Activated CD8-positive, alpha-beta T cell treated with anti-CD3 and anti-CD28 coated beads, Interleukin-2, amount 10 ng/mL, durations not matched to agents 7 days and 5 days (primary cell): ENCODE measurements at regions of chr12 and their contacts with region 1.

Region 1: DNA sequence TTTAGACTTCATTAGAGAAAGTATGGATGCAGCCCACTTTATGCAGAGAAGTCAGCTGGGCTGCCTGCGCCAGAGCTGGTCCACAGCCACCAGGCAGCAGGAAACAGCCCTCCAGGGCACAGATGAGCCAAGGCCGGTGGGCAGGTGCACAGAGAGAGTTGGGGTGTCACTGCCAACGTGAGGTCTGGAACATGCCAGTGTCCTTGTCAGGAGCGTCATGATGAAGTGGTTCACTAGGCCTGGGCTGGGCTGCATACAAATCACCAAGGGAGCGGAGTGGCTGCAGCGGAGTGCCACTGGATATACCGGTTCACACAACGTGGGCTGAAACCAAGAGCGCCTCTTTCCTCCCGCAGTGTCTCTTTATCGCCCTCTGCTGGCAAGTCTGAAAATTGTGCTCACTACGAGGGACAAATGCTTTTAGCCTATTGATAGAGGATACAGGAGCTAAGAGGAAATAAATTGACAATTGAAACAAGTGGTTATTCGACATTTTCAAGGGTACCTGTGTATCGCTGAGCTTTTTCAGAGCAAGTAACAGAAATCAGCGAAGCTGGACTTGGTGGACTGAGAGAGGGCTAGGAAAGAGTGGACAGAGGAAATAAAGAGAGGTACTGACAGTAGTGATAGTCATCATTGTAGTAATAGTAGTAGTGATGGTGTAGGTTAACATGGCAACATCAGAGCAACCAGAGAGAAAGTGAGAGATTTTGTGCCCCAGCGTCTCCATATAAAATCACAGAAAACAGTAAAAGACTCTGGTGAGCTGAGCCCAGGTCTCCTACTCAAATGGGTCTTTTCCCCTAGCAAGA is 52.0 kb upstream of the ITPR2 start:
- DNase-seq: peak; percentile 91
- ATAC-seq: peak; percentile 96
- H3K4me3 Mint-ChIP-seq: peak overlapping the region; percentile 46
- H3K27ac Mint-ChIP-seq: peak overlapping the region; percentile 23
- H3K4me1 Mint-ChIP-seq: peaks cover 10% of the 10 kb centered on the region
- H3K27me3 Mint-ChIP-seq: peaks cover 5% of the 10 kb centered on the region

Region 2: GRCh38 chr12:26845057-26845666 is 39.8 kb before region 1 on chr12:
- CTCF ChIA-PET with region 1: interaction called, 19 read pairs
- POLR2A ChIA-PET with region 1: interaction called, 3 read pairs
- DNase-seq: no peak
- ATAC-seq: no peak
- H3K4me3 Mint-ChIP-seq: no peak overlapping the region
- H3K27ac Mint-ChIP-seq: no peak overlapping the region
- H3K4me1 Mint-ChIP-seq: peaks cover 8% of the 10 kb centered on the region
- H3K27me3 Mint-ChIP-seq: peaks cover 17% of the 10 kb centered on the region

Region 3: GRCh38 chr12:26863502-26863901 is 21.5 kb before region 1 on chr12:
- CTCF ChIA-PET with region 1: interaction called, 18 read pairs
- POLR2A ChIA-PET with region 1: no interaction called
- DNase-seq: no peak
- ATAC-seq: no peak
- H3K4me3 Mint-ChIP-seq: no peak overlapping the region
- H3K27ac Mint-ChIP-seq: no peak overlapping the region
- H3K4me1 Mint-ChIP-seq: peaks cover 12% of the 10 kb centered on the region
- H3K27me3 Mint-ChIP-seq: peaks cover 3% of the 10 kb centered on the region

Region 4: DNA sequence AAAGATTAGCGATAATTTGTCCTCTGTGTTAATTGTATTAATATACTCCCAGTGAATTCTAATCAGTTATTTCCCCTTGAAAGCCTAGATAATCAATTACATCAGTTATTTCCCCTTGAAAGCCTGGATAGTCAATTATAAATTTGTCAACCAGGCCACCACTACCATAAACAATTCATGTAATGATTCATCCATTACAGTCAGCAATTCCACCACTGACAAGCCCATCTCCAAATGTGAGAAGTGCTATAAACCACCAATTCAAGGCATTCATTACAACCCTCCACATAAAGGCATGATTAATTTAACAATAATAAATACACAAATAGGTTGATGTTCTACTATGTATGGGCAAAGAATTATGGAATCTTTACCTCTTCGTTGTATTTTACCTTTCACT is 11.9 kb after region 1 on chr12:
- CTCF ChIA-PET with region 1: interaction called, 23 read pairs
- POLR2A ChIA-PET with region 1: no interaction called
- DNase-seq: no peak
- ATAC-seq: no peak
- H3K4me3 Mint-ChIP-seq: no peak overlapping the region
- H3K27ac Mint-ChIP-seq: no peak overlapping the region
- H3K4me1 Mint-ChIP-seq: peaks cover 2% of the 10 kb centered on the region
- H3K27me3 Mint-ChIP-seq: no peaks in the 10 kb centered on the region

Region 5: GRCh38 chr12:26918309-26919215 is 33.6 kb after region 1 on chr12:
- CTCF ChIA-PET with region 1: interaction called, 12 read pairs
- POLR2A ChIA-PET with region 1: no interaction called
- DNase-seq: no peak
- ATAC-seq: no peak
- H3K4me3 Mint-ChIP-seq: no peak overlapping the region
- H3K27ac Mint-ChIP-seq: no peak overlapping the region
- H3K4me1 Mint-ChIP-seq: no peaks in the 10 kb centered on the region
- H3K27me3 Mint-ChIP-seq: no peaks in the 10 kb centered on the region

Region 6: DNA sequence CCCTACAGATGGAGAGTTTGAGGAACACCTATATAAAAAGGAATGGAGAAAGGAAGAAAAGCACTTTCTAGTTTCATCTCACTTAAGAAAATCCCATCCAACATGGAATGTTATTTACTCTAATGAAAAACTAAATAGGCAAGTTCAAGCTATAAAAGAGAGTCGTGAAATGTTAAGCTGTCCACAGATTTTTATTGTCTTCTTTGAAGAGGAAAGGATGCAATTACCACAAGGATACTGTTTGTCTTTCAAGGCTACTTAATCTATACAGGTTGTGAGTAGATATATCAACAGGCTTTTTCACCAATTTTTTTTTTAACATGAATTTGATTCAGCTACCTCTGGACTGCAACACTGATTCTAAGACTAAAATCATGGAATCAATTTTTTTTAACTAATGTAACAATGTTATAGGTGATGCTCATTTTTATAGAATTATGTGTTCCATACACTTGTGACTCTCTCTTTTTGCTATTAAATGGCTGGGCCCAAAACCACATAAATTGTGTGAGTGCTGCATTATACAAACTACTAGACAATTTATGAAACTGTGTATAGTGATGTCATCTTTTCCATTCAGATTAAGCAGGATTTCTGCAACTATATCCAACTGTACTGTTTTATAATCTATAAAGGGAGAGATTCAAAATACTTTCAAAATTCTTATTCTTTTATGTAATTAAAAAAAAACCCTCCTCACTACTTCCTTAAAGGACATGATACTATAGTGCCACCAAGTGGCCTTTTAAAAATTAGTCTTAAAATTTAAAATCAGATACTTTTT is 420.9 kb after region 1 on chr12:
- CTCF ChIA-PET with region 1: interaction called, 11 read pairs
- POLR2A ChIA-PET with region 1: no interaction called
- DNase-seq: no peak
- ATAC-seq: peak; percentile 53
- H3K4me3 Mint-ChIP-seq: no peak overlapping the region
- H3K27ac Mint-ChIP-seq: no peak overlapping the region
- H3K4me1 Mint-ChIP-seq: peaks cover 15% of the 10 kb centered on the region
- H3K27me3 Mint-ChIP-seq: no peaks in the 10 kb centered on the region